Panc1 (cell line): ENCODE measurements at regions of chr4 and their contacts with region 1.

Region 1: DNA sequence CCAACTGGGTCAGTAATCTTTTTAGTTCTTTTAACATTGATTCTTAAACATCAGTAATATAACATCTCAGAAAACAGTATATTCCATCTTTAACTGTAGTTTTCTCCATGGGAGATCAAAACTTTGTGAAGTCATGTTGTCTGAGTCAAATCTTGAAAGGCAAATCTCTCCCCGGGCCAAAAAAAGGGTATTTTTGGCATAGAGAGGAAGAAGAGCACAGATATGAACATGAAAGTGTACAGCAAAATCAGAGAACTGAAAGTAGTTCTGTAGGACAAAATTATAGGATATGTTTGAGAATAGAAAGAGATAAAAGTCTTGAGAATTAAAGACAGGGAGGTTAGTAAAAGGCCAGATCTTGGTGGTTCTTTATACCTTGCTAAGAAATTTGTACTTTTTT is 176.4 kb upstream of the GYPA start:
- DNase-seq: no peak
- ATAC-seq: no peak
- H3K4me3 ChIP-seq: no peak overlapping the region
- H3K27ac ChIP-seq: no peak overlapping the region
- H3K4me1 ChIP-seq: no peaks in the 10 kb centered on the region
- H3K27me3 ChIP-seq: no peaks in the 10 kb centered on the region
- CTCF ChIP-seq: no peak

Region 2: DNA sequence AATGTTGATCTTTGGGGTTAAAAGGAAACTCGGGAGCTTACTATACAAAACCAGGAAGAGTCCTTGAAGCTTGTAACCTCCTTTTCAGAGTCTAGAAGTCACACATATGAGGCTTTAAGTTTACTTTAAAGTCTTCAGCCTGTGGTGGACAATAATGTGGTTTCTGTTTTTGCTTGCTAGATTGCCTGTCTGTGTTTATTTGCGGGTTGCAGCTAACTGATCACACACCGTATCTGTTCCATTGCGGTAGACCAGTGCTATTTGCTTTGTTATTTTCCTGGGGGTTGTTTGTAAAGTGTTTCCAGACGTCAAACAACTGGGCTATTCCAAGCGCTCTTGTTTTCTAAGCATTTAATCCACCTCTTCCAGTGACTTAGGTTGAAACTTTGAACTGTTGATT is 33.3 kb before region 1 on chr4:
- CTCF ChIA-PET with region 1: no interaction called
- POLR2A ChIA-PET with region 1: no interaction called
- in situ Hi-C with region 1: no loop called
- intact Hi-C with region 1: loop called (anchors 1 kb)
- DNase-seq: no peak
- ATAC-seq: no peak
- H3K4me3 ChIP-seq: no peak overlapping the region
- H3K27ac ChIP-seq: no peak overlapping the region
- H3K4me1 ChIP-seq: no peaks in the 10 kb centered on the region
- H3K27me3 ChIP-seq: no peaks in the 10 kb centered on the region
- CTCF ChIP-seq: no peak